ENCODE measurements at regions of chr18 and their contacts with region 1.

Region 1: GRCh38 chr18:42274488-42275137 is 319.6 kb downstream of the PIK3C3 start:
- DNase-seq: peak; percentile 74
- H3K4me3 ChIP-seq: no peak overlapping the region
- H3K27ac ChIP-seq: peak overlapping the region; percentile 93
- H3K4me1 ChIP-seq: peaks cover 47% of the 10 kb centered on the region
- H3K27me3 ChIP-seq: no peaks in the 10 kb centered on the region
- CTCF ChIP-seq: peak; percentile 57

Region 2: DNA sequence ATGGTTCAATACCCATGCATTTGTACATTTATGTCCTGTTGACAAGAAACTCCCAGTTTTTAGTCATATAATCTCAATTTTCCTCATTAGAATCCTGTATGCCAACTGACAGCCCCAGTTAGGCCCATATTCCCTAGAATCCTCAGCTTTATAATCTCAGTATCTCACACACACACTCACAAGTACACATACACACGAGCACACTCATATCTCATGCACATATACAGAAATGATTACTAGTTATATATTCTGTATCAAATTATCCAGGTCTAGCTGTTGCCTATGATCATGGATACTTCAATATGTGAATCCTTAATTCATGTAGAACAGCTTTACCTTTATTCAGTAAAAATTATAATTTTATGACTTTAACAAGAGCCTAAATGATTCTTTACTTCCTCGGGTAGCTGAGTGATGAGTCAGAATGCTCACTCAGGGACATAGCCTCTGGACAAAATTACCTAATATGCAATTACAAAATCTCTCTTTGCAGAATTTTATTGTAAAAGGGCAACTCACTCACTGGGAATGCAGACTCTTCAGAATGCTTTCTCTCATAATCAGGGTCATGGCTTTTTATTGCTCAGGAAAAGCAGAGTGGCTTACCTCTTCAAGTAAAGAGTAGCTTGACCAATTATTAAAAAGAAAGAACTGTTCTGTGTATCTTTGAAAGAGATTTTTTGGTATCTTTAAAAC is 513.1 kb before region 1 on chr18:
- CTCF ChIA-PET with region 1: no interaction called
- POLR2A ChIA-PET with region 1: no interaction called
- intact Hi-C with region 1: no loop called
- DNase-seq: peak; percentile 23
- H3K4me3 ChIP-seq: no peak overlapping the region
- H3K27ac ChIP-seq: no peak overlapping the region
- H3K4me1 ChIP-seq: no peaks in the 10 kb centered on the region
- H3K27me3 ChIP-seq: peaks cover 6% of the 10 kb centered on the region
- CTCF ChIP-seq: no peak

Region 3: GRCh38 chr18:41938445-41938844 is 336.2 kb before region 1 on chr18:
- CTCF ChIA-PET with region 1: interaction called, 8 read pairs
- POLR2A ChIA-PET with region 1: no interaction called
- intact Hi-C with region 1: loop called (anchors 5 kb)
- DNase-seq: peak; percentile 89
- H3K4me3 ChIP-seq: no peak overlapping the region
- H3K27ac ChIP-seq: peak overlapping the region; percentile 86
- H3K4me1 ChIP-seq: peaks cover 43% of the 10 kb centered on the region
- H3K27me3 ChIP-seq: no peaks in the 10 kb centered on the region
- CTCF ChIP-seq: 0 out of 2 replicates have a peak, but pooled peaks have one; percentile 12

Region 4: DNA sequence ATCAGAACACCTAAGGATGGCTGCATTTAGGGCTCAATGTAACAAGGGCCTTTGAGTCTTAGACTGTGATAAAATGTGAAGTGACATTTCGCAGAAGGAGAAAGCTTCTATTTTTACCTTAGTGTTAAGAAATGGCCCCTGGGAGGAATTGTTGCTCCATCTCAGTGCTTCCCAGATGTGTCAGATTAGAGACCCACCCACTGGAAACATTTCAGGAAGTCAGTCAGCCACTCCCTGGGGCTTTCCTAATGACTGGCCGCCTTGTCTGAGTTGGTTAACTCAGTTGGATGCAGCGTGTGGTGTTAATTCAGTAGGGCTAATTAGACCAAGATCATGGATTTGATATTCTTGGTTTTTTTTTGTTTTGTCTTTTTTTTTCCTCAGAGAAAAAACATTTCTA is 36.3 kb after region 1 on chr18:
- CTCF ChIA-PET with region 1: no interaction called
- POLR2A ChIA-PET with region 1: no interaction called
- intact Hi-C with region 1: loop called (anchors 5 kb)
- DNase-seq: peak; percentile 94
- H3K4me3 ChIP-seq: no peak overlapping the region
- H3K27ac ChIP-seq: peak overlapping the region; percentile 52
- H3K4me1 ChIP-seq: peaks cover 23% of the 10 kb centered on the region
- H3K27me3 ChIP-seq: no peaks in the 10 kb centered on the region
- CTCF ChIP-seq: 0 out of 2 replicates have a peak, but pooled peaks have one; percentile 9

Region 5: GRCh38 chr18:42330296-42330695 is 55.7 kb after region 1 on chr18:
- CTCF ChIA-PET with region 1: no interaction called
- POLR2A ChIA-PET with region 1: no interaction called
- intact Hi-C with region 1: loop called (anchors 5 kb)
- DNase-seq: peak; percentile 41
- H3K4me3 ChIP-seq: no peak overlapping the region
- H3K27ac ChIP-seq: no peak overlapping the region
- H3K4me1 ChIP-seq: peaks cover 14% of the 10 kb centered on the region
- H3K27me3 ChIP-seq: no peaks in the 10 kb centered on the region
- CTCF ChIP-seq: no peak

Region 6: GRCh38 chr18:43601432-43601831 is 1326.8 kb after region 1 on chr18:
- CTCF ChIA-PET with region 1: no interaction called
- POLR2A ChIA-PET with region 1: no interaction called
- intact Hi-C with region 1: loop called (anchors 1 kb)
- DNase-seq: peak; percentile 83
- H3K4me3 ChIP-seq: no peak overlapping the region
- H3K27ac ChIP-seq: peak overlapping the region; percentile 98
- H3K4me1 ChIP-seq: peaks cover 40% of the 10 kb centered on the region
- H3K27me3 ChIP-seq: no peaks in the 10 kb centered on the region
- CTCF ChIP-seq: no peak

Measured in A673 (cell line).